ENCODE measurements at regions of chr7 and their contacts with region 1.

Region 1: GRCh38 chr7:90312745-90313144 is 8.4 kb downstream of the FAM237B start:
- H3K4me3 ChIP-seq: no peak overlapping the region
- H3K27ac ChIP-seq: no peak overlapping the region
- H3K4me1 ChIP-seq: no peaks in the 10 kb centered on the region
- CTCF ChIP-seq: no peak

Region 2: GRCh38 chr7:89761173-89761572 is 551.6 kb before region 1 on chr7:
- CTCF ChIA-PET with region 1: no interaction called
- POLR2A ChIA-PET with region 1: no interaction called
- H3K4me3 ChIP-seq: no peak overlapping the region
- H3K27ac ChIP-seq: no peak overlapping the region
- H3K4me1 ChIP-seq: no peaks in the 10 kb centered on the region
- CTCF ChIP-seq: no peak

Region 3: DNA sequence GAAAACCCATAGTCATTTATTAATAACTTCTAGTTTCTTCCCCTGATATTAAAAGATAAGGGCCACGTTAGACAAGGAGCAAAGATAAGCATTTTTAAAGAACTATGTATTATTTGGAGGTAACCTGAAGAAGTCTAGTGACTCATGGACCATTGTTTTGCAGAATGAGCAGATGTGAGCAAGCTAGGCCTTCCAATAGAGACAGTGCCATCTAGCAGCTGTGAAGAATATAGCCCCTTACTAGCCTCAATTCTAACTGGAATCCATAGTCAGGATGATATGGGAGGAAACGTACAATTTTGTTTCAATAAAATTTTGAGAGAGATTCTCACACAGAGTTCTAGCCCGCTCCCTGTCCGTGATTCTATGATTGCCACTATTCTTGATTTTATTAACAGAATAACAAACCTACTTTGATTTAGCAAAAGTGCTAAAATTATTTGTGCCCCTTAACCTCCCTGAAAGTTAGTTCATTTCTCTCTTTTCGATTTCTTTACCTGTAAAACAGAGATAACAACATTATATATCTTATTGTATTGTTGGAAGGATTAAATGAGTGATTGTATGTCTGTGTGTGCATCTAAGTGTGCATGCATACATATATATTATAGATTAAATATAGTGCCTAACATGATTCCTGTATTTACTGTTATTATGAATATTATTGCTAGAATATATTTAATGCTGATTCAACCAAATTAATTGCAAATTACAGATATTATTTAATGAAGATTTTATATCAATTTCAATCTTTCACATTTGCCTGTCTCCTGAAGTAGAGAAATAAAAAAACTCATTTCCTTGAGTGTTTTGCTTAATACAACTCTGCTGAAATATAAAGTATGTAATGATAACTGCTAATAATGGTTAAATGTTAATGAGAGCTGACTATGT is 14.4 kb before region 1 on chr7:
- CTCF ChIA-PET with region 1: interaction called, 10 read pairs
- POLR2A ChIA-PET with region 1: no interaction called
- H3K4me3 ChIP-seq: no peak overlapping the region
- H3K27ac ChIP-seq: no peak overlapping the region
- H3K4me1 ChIP-seq: no peaks in the 10 kb centered on the region
- CTCF ChIP-seq: no peak

Region 4: DNA sequence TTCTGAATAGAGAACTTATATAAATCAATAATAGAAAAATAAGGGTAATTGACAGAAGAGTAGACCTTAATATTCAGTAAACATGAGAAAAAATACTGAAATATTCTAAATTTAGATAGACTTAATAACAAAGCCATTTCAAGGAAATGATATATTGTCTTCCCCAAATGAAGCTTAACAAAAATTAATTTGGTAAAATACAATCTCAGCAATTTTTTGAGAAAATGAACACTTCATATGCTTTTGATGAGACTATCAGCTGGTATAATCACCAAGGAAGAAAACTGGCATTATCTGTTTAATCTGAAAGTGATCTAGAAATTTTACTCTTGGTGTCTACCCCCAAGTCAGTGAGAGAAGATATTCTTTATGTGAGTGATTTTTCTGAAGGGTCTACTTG is 10.1 kb after region 1 on chr7:
- CTCF ChIA-PET with region 1: no interaction called
- POLR2A ChIA-PET with region 1: no interaction called
- H3K4me3 ChIP-seq: no peak overlapping the region
- H3K27ac ChIP-seq: no peak overlapping the region
- H3K4me1 ChIP-seq: no peaks in the 10 kb centered on the region
- CTCF ChIP-seq: no peak

Region 5: GRCh38 chr7:90540406-90540805 is 227.7 kb after region 1 on chr7:
- CTCF ChIA-PET with region 1: no interaction called
- POLR2A ChIA-PET with region 1: no interaction called
- H3K4me3 ChIP-seq: no peak overlapping the region
- H3K27ac ChIP-seq: no peak overlapping the region
- H3K4me1 ChIP-seq: no peaks in the 10 kb centered on the region
- CTCF ChIP-seq: no peak